ENCODE measurements at regions of chr1 and their contacts with region 1.

Region 1: DNA sequence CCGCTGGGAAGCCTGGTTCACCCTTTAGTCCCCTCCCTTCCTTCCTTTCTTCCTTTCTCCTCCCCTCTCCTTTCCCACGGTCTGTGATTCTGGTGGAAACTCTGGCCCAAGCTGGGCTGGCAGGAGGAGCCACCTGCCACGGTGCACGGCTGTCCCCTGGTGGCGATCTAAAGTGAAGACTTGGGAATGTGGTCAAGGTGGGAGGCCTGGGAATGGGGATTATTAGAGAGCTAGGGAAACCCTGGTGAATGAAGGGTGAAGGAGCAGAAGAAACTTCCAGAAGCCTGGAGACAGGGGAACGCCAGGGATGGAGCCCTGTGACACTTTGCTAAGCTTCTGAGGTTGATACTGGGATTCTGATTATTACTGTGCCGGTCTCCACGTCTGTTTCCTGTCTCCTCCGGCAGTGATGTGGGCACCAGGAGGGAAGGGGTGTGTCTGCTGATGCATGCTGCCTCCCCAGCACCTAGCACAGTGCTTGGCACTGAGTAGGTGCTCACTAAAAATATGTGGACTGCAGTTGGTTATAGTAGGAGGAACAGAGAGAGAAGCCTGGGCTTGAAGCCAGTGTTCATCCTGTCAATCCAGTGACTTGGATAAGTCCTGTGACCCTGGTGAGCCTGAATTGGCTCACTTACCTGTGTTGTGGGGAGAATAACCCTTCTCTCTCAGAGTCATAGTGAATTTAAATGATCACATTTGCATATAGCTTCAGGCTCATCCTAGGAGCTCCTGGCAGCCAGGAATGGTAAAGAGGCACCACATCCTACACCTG is 71.2 kb upstream of the NBPF3 start:
- DNase-seq: peak; percentile 75
- ATAC-seq: peak; percentile 87
- H3K4me3 Mint-ChIP-seq: peak overlapping the region; percentile 18
- H3K27ac Mint-ChIP-seq: peak overlapping the region; percentile 37
- H3K4me1 Mint-ChIP-seq: peaks cover 16% of the 10 kb centered on the region
- H3K27me3 Mint-ChIP-seq: no peaks in the 10 kb centered on the region

Region 2: DNA sequence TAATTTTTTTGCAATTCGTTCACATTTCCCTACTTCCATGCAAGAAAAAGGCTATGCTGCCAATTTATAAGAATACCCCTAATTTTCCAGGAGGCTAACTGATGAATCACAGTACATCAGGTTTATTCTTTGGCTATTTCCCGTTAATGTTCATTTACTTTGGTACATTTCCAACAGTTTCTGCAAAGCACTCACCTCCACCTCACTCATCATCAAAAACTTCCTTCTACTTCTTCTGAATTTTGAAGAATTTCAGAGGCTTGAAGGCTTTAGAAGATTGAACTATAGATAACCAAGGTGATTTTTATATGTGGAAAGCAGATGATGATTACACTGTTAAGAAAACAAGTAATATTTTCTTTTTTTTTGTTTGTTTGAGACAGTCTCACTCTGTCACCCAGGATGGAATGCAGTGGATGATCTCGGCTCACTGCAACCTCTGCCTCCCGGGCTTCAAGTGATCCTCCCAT is 521.1 kb before region 1 on chr1:
- CTCF ChIA-PET with region 1: no interaction called
- POLR2A ChIA-PET with region 1: no interaction called
- intact Hi-C with region 1: no loop called
- DNase-seq: no peak
- ATAC-seq: no peak
- H3K4me3 Mint-ChIP-seq: no peak overlapping the region
- H3K27ac Mint-ChIP-seq: no peak overlapping the region
- H3K4me1 Mint-ChIP-seq: no peaks in the 10 kb centered on the region
- H3K27me3 Mint-ChIP-seq: no peaks in the 10 kb centered on the region

Region 3: GRCh38 chr1:21216835-21217811 is 151.6 kb before region 1 on chr1:
- CTCF ChIA-PET with region 1: interaction called, 20 read pairs
- POLR2A ChIA-PET with region 1: no interaction called
- intact Hi-C with region 1: loop called (anchors 1 to 5 kb)
- DNase-seq: peak; percentile 86
- ATAC-seq: peak; percentile 71
- H3K4me3 Mint-ChIP-seq: no peak overlapping the region
- H3K27ac Mint-ChIP-seq: peak overlapping the region; percentile 37
- H3K4me1 Mint-ChIP-seq: no peaks in the 10 kb centered on the region
- H3K27me3 Mint-ChIP-seq: no peaks in the 10 kb centered on the region

Region 4: GRCh38 chr1:21255278-21255942 is 113.3 kb before region 1 on chr1:
- CTCF ChIA-PET with region 1: interaction called, 50 read pairs
- POLR2A ChIA-PET with region 1: no interaction called
- intact Hi-C with region 1: loop called (anchors 1 kb)
- DNase-seq: peak; percentile 90
- ATAC-seq: peak; percentile 64
- H3K4me3 Mint-ChIP-seq: no peak overlapping the region
- H3K27ac Mint-ChIP-seq: peak overlapping the region; percentile 84
- H3K4me1 Mint-ChIP-seq: peaks cover 48% of the 10 kb centered on the region
- H3K27me3 Mint-ChIP-seq: no peaks in the 10 kb centered on the region

Region 5: DNA sequence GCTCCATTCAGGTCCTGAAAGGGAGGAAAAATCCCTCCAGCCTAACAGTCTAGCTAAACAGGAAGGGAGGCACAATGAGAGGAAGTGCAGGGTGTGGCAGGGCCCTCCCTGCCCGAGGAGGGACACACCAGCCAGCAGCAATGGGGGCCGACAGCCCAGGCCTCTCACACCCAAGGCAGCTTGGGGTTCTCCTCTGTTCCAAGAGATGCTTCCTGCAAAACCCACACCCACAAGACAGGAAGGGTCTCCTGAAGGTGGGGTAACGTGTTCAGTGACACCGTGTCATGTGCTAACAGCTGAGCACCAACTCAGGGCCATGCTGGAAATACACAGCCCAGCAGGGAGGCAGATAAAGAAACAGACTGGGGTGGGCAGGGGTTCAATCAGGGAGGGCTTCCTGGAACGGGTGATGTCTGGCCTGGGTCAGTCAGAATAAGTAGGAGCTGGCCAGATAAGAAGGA is 88.7 kb before region 1 on chr1:
- CTCF ChIA-PET with region 1: no interaction called
- POLR2A ChIA-PET with region 1: no interaction called
- intact Hi-C with region 1: no loop called
- DNase-seq: no peak
- ATAC-seq: peak; percentile 19
- H3K4me3 Mint-ChIP-seq: peak overlapping the region; percentile 33
- H3K27ac Mint-ChIP-seq: peak overlapping the region; percentile 90
- H3K4me1 Mint-ChIP-seq: peaks cover 53% of the 10 kb centered on the region
- H3K27me3 Mint-ChIP-seq: no peaks in the 10 kb centered on the region

Region 6: GRCh38 chr1:21334214-21335087 is 34.3 kb before region 1 on chr1:
- CTCF ChIA-PET with region 1: interaction called, 11 read pairs
- POLR2A ChIA-PET with region 1: no interaction called
- intact Hi-C with region 1: no loop called
- DNase-seq: peak; percentile 87
- ATAC-seq: peak; percentile 84
- H3K4me3 Mint-ChIP-seq: peak overlapping the region; percentile 80
- H3K27ac Mint-ChIP-seq: peak overlapping the region; percentile 97
- H3K4me1 Mint-ChIP-seq: peaks cover 97% of the 10 kb centered on the region
- H3K27me3 Mint-ChIP-seq: no peaks in the 10 kb centered on the region

Region 7: GRCh38 chr1:21468599-21468998 is 99.9 kb after region 1 on chr1:
- CTCF ChIA-PET with region 1: interaction called, 3 read pairs
- POLR2A ChIA-PET with region 1: no interaction called
- intact Hi-C with region 1: loop called in 1 of 2 experiments (anchors 1 kb)
- DNase-seq: peak; percentile 62
- ATAC-seq: no peak
- H3K4me3 Mint-ChIP-seq: no peak overlapping the region
- H3K27ac Mint-ChIP-seq: no peak overlapping the region
- H3K4me1 Mint-ChIP-seq: no peaks in the 10 kb centered on the region
- H3K27me3 Mint-ChIP-seq: no peaks in the 10 kb centered on the region

Measured in activated CD4-positive, alpha-beta T cell treated with anti-CD3 and anti-CD28 coated beads for 36 hours (primary cell).